ENCODE measurements at regions of chr15 and their contacts with region 1.

Region 1: DNA sequence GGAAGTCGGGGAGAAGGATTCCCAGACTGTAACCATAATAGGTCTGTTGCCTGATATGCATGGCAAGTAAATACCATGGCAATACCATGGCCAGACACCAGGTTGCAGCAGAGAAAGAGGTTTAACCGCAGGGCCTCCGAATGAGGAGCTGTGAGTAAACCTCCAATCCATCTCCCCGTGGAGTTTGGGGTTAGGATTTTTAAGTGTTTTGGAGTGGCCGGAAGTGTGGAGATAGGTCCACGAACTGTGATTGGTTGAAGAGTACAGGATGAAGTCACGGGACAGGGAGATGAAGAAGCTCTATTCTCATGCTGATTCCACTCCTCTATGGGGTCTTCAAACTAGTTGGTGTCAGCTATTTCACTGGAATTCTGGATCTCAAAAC is 127.9 kb downstream of the ST8SIA2 start:
- DNase-seq: peak; percentile 89
- H3K4me3 ChIP-seq: no peak overlapping the region
- H3K27ac ChIP-seq: no peak overlapping the region
- H3K4me1 ChIP-seq: peaks cover 6% of the 10 kb centered on the region
- H3K27me3 ChIP-seq: no peaks in the 10 kb centered on the region
- CTCF ChIP-seq: peak; percentile 72
- POLR2A ChIP-seq: no peak

Region 2: GRCh38 chr15:91473894-91474545 is 1047.6 kb before region 1 on chr15:
- CTCF ChIA-PET with region 1: no interaction called
- POLR2A ChIA-PET with region 1: no interaction called
- dilution Hi-C with region 1: no loop called
- intact Hi-C with region 1: no loop called
- DNase-seq: no peak
- H3K4me3 ChIP-seq: no peak overlapping the region
- H3K27ac ChIP-seq: no peak overlapping the region
- H3K4me1 ChIP-seq: no peaks in the 10 kb centered on the region
- H3K27me3 ChIP-seq: no peaks in the 10 kb centered on the region
- CTCF ChIP-seq: no peak
- POLR2A ChIP-seq: no peak

Region 3: DNA sequence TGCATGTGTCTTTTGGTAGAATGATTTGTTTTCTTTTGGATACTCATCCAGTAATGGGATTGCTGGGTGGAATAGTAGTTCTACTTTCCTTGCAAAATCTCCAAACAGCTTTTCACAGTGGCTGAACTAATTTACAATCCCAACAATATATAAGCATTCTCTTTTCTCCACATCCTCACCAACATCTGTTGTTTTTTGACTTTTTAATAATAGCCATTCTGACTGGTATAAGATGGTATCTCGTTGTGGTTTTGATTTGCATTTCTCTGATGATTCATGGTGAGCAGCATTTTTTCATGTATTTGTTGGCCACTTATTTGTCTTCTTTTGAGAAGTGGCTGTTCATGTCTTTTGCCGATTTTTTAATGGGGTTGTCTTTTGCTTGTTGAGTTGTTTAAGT is 72.1 kb before region 1 on chr15:
- CTCF ChIA-PET with region 1: no interaction called
- POLR2A ChIA-PET with region 1: no interaction called
- dilution Hi-C with region 1: no loop called
- intact Hi-C with region 1: no loop called
- DNase-seq: no peak
- H3K4me3 ChIP-seq: no peak overlapping the region
- H3K27ac ChIP-seq: no peak overlapping the region
- H3K4me1 ChIP-seq: no peaks in the 10 kb centered on the region
- H3K27me3 ChIP-seq: no peaks in the 10 kb centered on the region
- CTCF ChIP-seq: no peak
- POLR2A ChIP-seq: no peak

Region 4: DNA sequence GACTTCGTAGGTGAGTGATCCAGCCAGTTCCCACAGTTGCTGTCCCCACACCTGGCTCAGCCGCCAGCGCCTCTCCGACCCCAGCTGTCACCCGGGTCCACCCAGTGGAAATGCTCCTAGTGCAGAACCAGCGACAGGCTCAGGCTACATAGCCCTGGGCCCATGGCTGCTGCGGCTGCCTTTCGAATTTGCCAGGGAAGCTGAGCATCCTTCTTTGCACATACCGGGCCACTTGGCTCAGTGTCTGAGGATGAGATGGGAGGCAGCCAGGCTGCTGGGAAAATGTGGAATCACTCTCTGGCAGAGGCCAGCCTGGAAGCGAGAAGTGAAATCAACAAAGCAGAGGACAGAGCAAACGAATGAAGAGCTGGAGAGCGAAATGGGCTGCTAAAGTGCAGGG is 47.9 kb before region 1 on chr15:
- CTCF ChIA-PET with region 1: no interaction called
- POLR2A ChIA-PET with region 1: no interaction called
- dilution Hi-C with region 1: no loop called
- intact Hi-C with region 1: no loop called
- DNase-seq: no peak
- H3K4me3 ChIP-seq: no peak overlapping the region
- H3K27ac ChIP-seq: no peak overlapping the region
- H3K4me1 ChIP-seq: no peaks in the 10 kb centered on the region
- H3K27me3 ChIP-seq: no peaks in the 10 kb centered on the region
- CTCF ChIP-seq: no peak
- POLR2A ChIP-seq: no peak

Region 5: DNA sequence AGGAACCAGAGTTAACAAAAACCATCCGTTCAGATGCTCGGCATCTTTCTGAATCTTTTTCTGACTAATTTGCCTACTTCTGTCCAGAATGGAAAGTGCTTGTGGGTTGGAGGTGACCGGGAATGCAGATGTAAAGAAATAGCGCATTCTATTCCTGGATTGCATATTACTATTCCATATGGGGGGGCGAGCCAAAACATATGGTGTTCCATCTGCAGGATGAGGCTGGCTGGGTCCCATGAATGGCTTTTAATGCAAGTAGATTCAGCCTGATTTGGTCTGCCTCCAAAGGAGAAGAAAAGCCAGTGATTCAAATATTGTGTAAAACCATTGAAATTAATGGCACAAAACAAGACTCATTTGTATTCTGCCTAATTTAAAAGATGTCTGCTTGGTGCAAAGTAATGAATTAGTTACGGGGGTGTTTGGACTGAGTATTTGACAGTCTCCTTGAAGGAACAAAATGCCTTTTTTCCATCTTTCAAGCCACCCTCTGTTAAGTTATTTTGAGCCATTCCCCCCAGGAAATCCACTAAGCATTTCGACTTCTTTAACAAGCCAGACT is 29.0 kb before region 1 on chr15:
- CTCF ChIA-PET with region 1: no interaction called
- POLR2A ChIA-PET with region 1: no interaction called
- dilution Hi-C with region 1: no loop called
- intact Hi-C with region 1: no loop called
- DNase-seq: no peak
- H3K4me3 ChIP-seq: no peak overlapping the region
- H3K27ac ChIP-seq: no peak overlapping the region
- H3K4me1 ChIP-seq: no peaks in the 10 kb centered on the region
- H3K27me3 ChIP-seq: no peaks in the 10 kb centered on the region
- CTCF ChIP-seq: no peak
- POLR2A ChIP-seq: no peak

Region 6: GRCh38 chr15:92533298-92533697 is 11.7 kb after region 1 on chr15:
- CTCF ChIA-PET with region 1: interaction called, 27 read pairs
- POLR2A ChIA-PET with region 1: no interaction called
- dilution Hi-C with region 1: no loop called
- intact Hi-C with region 1: loop called (anchors 1 kb)
- DNase-seq: peak; percentile 86
- H3K4me3 ChIP-seq: no peak overlapping the region
- H3K27ac ChIP-seq: peak overlapping the region; percentile 82
- H3K4me1 ChIP-seq: peaks cover 21% of the 10 kb centered on the region
- H3K27me3 ChIP-seq: no peaks in the 10 kb centered on the region
- CTCF ChIP-seq: no peak
- POLR2A ChIP-seq: no peak

Region 7: GRCh38 chr15:92611993-92612745 is 90.6 kb after region 1 on chr15:
- CTCF ChIA-PET with region 1: interaction called, 22 read pairs
- POLR2A ChIA-PET with region 1: no interaction called
- dilution Hi-C with region 1: no loop called
- intact Hi-C with region 1: loop called (anchors 1 kb)
- DNase-seq: no peak
- H3K4me3 ChIP-seq: no peak overlapping the region
- H3K27ac ChIP-seq: no peak overlapping the region
- H3K4me1 ChIP-seq: peaks cover 10% of the 10 kb centered on the region
- H3K27me3 ChIP-seq: no peaks in the 10 kb centered on the region
- CTCF ChIP-seq: no peak
- POLR2A ChIP-seq: no peak

Region 8: DNA sequence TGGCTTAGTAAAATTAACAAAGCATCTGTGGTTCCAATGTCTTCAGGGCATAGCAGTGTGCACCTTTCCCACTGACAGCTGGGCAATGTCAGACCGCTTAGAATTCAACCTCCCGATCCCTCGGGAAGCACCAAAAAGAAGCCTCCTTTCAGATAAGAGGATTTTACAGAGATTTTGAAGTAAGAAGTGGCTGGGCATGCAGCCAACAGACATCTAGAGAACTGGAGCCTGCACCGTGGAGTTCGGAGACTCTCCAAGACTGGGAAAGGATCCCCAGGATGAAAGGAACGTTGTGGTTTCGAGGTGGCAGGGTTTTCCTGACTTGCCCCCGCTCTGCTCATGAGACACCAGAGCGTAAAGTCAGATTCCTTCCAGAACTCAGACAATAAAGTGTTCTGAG is 128.6 kb after region 1 on chr15:
- CTCF ChIA-PET with region 1: interaction called, 39 read pairs
- POLR2A ChIA-PET with region 1: no interaction called
- dilution Hi-C with region 1: no loop called
- intact Hi-C with region 1: loop called (anchors 1 kb)
- DNase-seq: no peak
- H3K4me3 ChIP-seq: no peak overlapping the region
- H3K27ac ChIP-seq: no peak overlapping the region
- H3K4me1 ChIP-seq: peaks cover 33% of the 10 kb centered on the region
- H3K27me3 ChIP-seq: no peaks in the 10 kb centered on the region
- CTCF ChIP-seq: no peak
- POLR2A ChIP-seq: no peak

Region 9: DNA sequence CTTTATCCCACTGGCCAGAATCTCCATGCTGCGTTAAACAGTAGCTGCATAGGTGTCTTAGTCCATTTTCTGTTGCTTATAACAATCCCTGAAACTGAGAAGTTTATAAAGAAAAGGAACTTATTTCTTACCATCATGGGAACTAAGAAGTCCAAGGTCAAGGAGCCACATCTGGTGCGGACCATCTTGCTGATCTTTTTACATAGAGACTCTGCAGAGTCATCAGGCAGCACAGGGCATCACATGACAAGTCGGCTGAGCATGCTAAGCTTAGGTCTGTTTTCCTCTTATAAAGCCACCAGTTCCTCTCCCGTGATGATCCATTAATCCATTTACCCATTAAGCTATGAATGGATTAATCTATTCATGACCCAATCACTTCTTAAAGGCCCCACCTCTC is 156.4 kb after region 1 on chr15:
- CTCF ChIA-PET with region 1: interaction called, 78 read pairs
- POLR2A ChIA-PET with region 1: no interaction called
- dilution Hi-C with region 1: no loop called
- intact Hi-C with region 1: no loop called
- DNase-seq: no peak
- H3K4me3 ChIP-seq: no peak overlapping the region
- H3K27ac ChIP-seq: no peak overlapping the region
- H3K4me1 ChIP-seq: peaks cover 5% of the 10 kb centered on the region
- H3K27me3 ChIP-seq: no peaks in the 10 kb centered on the region
- CTCF ChIP-seq: no peak
- POLR2A ChIP-seq: no peak

Region 10: DNA sequence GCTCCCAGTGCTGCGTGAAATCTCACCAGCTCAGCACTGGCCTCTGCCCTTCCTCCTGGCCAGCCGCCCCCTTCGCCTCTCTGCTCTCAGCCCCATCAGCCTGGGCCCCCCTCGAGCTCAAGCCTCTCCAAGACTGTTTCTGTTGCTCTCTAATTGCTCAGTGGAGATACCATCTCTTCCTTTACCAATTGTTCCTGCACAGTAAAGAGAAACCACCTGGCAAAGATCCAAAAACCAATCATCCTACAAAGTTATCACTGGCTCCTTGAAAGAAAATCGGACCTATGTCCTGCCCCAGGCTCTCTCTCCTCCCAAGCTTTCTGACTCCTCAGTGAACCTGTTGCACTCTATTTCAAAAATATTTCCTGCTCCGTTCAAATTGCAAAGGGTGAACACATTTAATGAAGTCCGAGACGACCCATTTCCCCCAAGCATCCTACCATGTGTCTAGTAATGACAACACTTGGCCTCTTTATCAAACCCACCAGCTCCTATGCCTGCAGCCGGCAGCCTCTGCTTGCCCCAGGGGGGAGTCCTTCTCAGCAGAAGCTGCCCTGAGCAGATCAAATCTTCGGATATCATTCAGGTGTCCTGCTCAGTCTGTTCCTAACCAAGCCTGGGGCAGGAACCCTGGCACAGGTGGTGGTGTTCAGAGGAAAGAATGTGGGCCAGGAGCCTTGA is 187.6 kb after region 1 on chr15:
- CTCF ChIA-PET with region 1: interaction called, 218 read pairs
- POLR2A ChIA-PET with region 1: no interaction called
- dilution Hi-C with region 1: no loop called
- intact Hi-C with region 1: loop called (anchors 1 kb)
- DNase-seq: peak; percentile 79
- H3K4me3 ChIP-seq: no peak overlapping the region
- H3K27ac ChIP-seq: peak overlapping the region; percentile 84
- H3K4me1 ChIP-seq: peaks cover 30% of the 10 kb centered on the region
- H3K27me3 ChIP-seq: no peaks in the 10 kb centered on the region
- CTCF ChIP-seq: no peak
- POLR2A ChIP-seq: no peak

Measured in endothelial cell of umbilical vein (primary cell).